ENCODE measurements at regions of chr9 and their contacts with region 1.

Region 1: DNA sequence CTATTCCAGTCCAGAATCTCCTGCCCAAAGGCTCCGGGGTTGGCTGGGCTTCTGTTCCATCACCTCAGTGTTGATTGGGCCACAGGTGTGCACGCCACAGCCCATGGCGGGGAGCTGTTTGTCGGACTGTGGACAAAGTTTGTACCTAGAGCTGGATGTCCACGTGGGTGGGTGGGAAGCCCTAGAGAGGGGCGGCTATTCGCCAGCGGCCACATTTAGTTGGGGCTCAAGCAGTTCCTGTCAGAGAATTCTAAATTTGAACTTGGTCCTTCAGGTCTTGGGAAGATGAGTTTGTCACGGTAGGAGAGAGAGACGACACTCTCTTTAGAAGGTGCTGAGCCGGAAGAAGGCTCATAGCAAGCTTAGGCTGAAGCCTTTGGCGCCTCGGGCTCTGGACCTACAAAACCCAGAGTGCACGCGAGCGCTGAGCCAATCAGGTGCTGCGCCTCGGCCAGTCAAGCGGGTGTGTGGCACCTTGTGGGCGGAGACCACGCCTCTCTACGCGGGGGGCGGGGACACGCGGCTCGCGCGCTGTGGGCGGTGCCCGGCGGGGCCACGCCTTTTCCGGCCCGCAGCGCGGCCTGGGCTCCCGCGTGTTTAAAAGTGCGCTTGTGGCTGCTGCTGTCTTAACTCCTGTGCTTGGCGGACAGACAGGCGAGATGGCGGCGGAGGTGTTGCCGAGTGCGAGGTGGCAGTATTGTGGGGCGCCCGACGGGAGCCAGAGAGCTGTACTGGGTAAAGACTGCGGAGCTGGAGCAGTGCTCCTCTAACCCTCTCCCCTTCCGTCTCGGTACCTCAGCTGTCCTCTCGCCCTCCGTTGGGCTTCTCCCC is at the start of gene POLR1E:
- DNase-seq: peak; percentile 97
- H3K4me3 Mint-ChIP-seq: peak within 1 kb of the TSS; percentile 99
- H3K27ac Mint-ChIP-seq: peak within 1 kb of the TSS; percentile 93
- H3K4me1 Mint-ChIP-seq: peaks cover 42% of the 10 kb centered on the region
- H3K27me3 Mint-ChIP-seq: peaks cover 7% of the 10 kb centered on the region
- total RNA-seq, gene POLR1E: 27.6 to 29.2 TPM

Region 2: DNA sequence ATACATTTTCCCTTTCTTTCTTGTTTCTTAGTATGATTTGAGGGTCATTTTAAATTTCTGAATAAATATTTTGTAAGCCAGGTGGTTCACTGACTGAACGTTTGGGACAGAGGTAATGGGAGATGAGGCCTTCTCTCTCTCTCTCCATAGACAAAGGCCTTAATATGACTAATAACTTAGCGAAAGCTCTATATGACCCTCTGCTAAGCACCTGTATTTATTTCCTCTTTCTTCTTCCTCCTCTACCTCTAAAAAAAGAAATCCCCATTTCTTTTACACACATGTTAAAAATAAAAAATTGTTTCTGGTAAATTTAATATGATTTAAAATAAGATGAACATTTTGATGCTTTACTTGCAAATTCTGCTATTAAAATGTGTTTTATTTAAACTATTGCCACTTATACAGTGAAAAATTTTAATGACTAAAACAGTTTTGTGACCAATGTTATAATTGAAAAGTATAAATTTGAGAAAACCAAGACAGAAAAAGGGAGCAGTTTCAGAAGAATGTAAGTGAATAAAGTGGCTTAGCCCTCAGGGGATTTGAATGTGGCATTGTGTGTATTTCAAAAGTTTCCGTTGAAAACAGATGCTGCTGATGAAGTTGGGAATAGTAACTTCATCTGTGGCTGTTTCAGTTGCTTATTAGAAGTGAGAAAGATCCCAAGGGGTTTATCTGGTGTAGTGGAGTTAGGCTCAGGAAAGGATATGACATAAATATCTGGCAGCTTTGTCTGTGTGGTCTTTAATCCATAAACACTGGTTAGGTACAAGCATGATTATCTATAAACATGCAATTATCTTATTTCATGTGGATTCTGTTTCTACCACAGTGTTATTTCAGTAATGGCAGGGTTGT is 191.7 kb before region 1 on chr9:
- CTCF ChIA-PET with region 1: no interaction called
- POLR2A ChIA-PET with region 1: no interaction called
- DNase-seq: no peak
- H3K4me3 Mint-ChIP-seq: no peak overlapping the region
- H3K27ac Mint-ChIP-seq: no peak overlapping the region
- H3K4me1 Mint-ChIP-seq: peaks cover 36% of the 10 kb centered on the region
- H3K27me3 Mint-ChIP-seq: no peaks in the 10 kb centered on the region

Region 3: DNA sequence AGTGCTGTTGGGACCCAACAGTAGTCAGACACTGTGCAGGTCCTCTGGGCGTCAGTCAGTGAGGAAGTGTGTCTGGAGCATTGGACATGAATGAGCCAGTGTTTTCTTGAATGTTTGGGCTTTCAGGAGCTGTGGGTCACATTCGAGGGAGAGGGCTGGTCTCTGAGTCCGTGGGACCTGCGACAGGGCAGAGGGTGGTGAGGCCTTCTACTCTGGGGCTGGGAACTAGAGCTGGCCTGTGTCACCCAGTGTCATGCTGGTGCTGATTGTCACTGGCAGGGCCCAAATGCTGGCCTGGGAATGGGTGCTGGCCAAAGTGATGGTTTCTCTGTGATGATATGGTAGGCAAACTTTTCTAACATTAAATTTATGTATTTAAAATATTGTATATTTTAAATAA is 10.4 kb after region 1 on chr9:
- CTCF ChIA-PET with region 1: interaction called, 7 read pairs
- POLR2A ChIA-PET with region 1: interaction called, 16 read pairs
- DNase-seq: no peak
- H3K4me3 Mint-ChIP-seq: no peak overlapping the region
- H3K27ac Mint-ChIP-seq: no peak overlapping the region
- H3K4me1 Mint-ChIP-seq: peaks cover 8% of the 10 kb centered on the region
- H3K27me3 Mint-ChIP-seq: no peaks in the 10 kb centered on the region

Region 4: DNA sequence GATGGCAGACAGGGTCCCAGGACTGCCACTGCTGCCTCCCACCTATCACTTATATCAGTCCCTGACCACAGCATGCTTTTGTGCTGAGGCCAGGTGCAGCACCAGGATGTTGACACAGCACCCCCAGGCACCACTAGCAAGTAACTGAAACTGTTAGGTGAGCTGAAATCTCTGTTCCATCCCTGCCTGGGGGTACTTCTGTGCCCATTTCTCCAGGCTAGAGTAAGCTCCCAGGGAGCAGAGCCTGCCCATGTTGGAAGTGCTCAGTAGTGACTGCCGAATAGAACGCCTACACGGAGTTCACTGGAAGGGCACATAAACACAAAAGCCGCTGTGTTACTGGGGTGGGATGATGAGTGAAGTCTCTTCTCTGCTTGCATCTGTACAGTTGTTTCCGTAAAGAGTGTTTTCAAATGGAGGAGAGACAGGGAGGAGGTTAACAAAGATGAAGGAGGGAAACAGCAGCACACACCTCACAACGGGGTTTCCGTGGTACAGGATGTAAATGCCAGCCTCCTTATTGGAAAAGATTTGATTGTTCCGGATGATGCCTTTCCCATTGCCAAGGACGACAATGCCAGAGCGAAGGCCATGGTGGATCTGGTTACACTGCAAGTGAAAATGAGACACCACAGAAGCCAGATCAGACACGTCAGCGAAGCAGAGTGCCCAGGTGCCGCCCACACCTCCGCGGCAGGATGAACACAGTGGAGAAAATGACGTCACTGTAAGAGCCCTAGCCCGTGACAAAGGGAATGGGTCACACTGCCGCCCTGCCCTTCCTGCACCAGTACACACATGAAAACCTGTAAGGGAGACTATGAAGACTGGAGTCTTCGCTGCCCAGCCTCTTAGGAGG is 43.3 kb after region 1 on chr9:
- CTCF ChIA-PET with region 1: interaction called, 3 read pairs
- POLR2A ChIA-PET with region 1: interaction called, 10 read pairs
- DNase-seq: peak; percentile 85
- H3K4me3 Mint-ChIP-seq: peak overlapping the region; percentile 67
- H3K27ac Mint-ChIP-seq: peak overlapping the region; percentile 84
- H3K4me1 Mint-ChIP-seq: peaks cover 31% of the 10 kb centered on the region
- H3K27me3 Mint-ChIP-seq: no peaks in the 10 kb centered on the region

Region 5: GRCh38 chr9:37592108-37592951 is 106.7 kb after region 1 on chr9 and contains the start of gene TOMM5:
- CTCF ChIA-PET with region 1: interaction called, 6 read pairs
- POLR2A ChIA-PET with region 1: interaction called, 58 read pairs
- DNase-seq: peak; percentile 94
- H3K4me3 Mint-ChIP-seq: peak within 1 kb of the TSS; percentile 97
- H3K27ac Mint-ChIP-seq: peak within 1 kb of the TSS; percentile 95
- H3K4me1 Mint-ChIP-seq: peaks cover 33% of the 10 kb centered on the region
- H3K27me3 Mint-ChIP-seq: peaks cover 17% of the 10 kb centered on the region
- total RNA-seq, gene TOMM5: 81.0 to 86.4 TPM